ENCODE measurements at regions of chr11 and their contacts with region 1.

Region 1: GRCh38 chr11:74492974-74493790 is at the start of gene LIPT2:
- DNase-seq: peak; percentile 98
- H3K4me3 ChIP-seq: peak within 1 kb of the TSS; percentile 58 to 98 (median 84)
- H3K27ac ChIP-seq: peak within 1 kb of the TSS; percentile 98 to 100 (median 99)
- H3K4me1 ChIP-seq: peaks cover 0 to 16% (median 11%) of the 10 kb centered on the region in 4 donors
- H3K27me3 ChIP-seq: no peaks in the 10 kb centered on the region
- CTCF ChIP-seq: no peak
- EP300 ChIP-seq: no peak
- POLR2A ChIP-seq: peak; percentile 87
- total RNA-seq, gene LIPT2: 4.1 to 11.6 (median 5.8) TPM

Region 2: GRCh38 chr11:74570266-74571061 is 77.3 kb after region 1 on chr11:
- in situ Hi-C with region 1: no loop called
- intact Hi-C with region 1: loop called (anchors 10 kb)
- DNase-seq: peak; percentile 66
- H3K4me3 ChIP-seq: no peak overlapping the region
- H3K27ac ChIP-seq: peak overlapping the region in 3 of 4 donors; percentile 63 to 73 (median 65)
- H3K4me1 ChIP-seq: peaks cover 0 to 34% (median 20%) of the 10 kb centered on the region in 4 donors
- H3K27me3 ChIP-seq: no peaks in the 10 kb centered on the region
- CTCF ChIP-seq: peak; percentile 56 to 87 (median 67)
- EP300 ChIP-seq: no peak
- POLR2A ChIP-seq: no peak

Measured in transverse colon (tissue), 4 donors.